ENCODE measurements at regions of chr1 and their contacts with region 1.

Region 1: GRCh38 chr1:37682334-37682987 is 9.9 kb upstream of the CDCA8 start:
- DNase-seq: peak; percentile 79
- ATAC-seq: peak; percentile 77
- H3K4me3 ChIP-seq: no peak overlapping the region
- H3K27ac ChIP-seq: no peak overlapping the region
- H3K4me1 ChIP-seq: no peaks in the 10 kb centered on the region
- H3K27me3 ChIP-seq: no peaks in the 10 kb centered on the region
- CTCF ChIP-seq: peak; percentile 93

Region 2: GRCh38 chr1:36516372-36517325 is 1165.8 kb before region 1 on chr1:
- CTCF ChIA-PET with region 1: no interaction called
- POLR2A ChIA-PET with region 1: no interaction called
- intact Hi-C with region 1: loop called (anchors 10 kb)
- DNase-seq: peak; percentile 59
- ATAC-seq: peak; percentile 90
- H3K4me3 ChIP-seq: no peak overlapping the region
- H3K27ac ChIP-seq: no peak overlapping the region
- H3K4me1 ChIP-seq: no peaks in the 10 kb centered on the region
- H3K27me3 ChIP-seq: no peaks in the 10 kb centered on the region
- CTCF ChIP-seq: peak; percentile 94

Region 3: DNA sequence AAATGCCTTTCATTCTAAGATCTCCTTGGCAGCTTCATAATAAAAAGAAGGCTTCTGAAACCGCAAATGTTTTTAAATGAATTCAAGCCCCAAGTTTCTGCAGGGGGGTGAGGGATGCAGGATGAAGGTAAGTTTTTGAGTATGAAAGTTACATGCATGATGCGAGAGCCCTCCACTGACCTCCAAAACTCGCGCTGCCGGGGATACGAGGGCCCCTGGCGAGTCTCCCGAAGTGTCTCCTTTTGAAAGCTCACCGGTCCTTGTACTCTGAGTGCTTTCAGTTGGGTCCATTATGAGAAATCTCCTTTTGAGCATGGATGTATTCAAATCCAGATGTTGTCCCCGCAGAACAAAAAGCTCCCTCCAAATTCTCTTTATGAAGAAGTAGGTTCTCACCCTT is 226.9 kb before region 1 on chr1:
- CTCF ChIA-PET with region 1: no interaction called
- POLR2A ChIA-PET with region 1: no interaction called
- intact Hi-C with region 1: loop called (anchors 1 kb)
- DNase-seq: no peak
- ATAC-seq: no peak
- H3K4me3 ChIP-seq: no peak overlapping the region
- H3K27ac ChIP-seq: no peak overlapping the region
- H3K4me1 ChIP-seq: peaks cover 8% of the 10 kb centered on the region; the same call in 1 of the 2 replicates
- H3K27me3 ChIP-seq: no peaks in the 10 kb centered on the region
- CTCF ChIP-seq: no peak

Region 4: DNA sequence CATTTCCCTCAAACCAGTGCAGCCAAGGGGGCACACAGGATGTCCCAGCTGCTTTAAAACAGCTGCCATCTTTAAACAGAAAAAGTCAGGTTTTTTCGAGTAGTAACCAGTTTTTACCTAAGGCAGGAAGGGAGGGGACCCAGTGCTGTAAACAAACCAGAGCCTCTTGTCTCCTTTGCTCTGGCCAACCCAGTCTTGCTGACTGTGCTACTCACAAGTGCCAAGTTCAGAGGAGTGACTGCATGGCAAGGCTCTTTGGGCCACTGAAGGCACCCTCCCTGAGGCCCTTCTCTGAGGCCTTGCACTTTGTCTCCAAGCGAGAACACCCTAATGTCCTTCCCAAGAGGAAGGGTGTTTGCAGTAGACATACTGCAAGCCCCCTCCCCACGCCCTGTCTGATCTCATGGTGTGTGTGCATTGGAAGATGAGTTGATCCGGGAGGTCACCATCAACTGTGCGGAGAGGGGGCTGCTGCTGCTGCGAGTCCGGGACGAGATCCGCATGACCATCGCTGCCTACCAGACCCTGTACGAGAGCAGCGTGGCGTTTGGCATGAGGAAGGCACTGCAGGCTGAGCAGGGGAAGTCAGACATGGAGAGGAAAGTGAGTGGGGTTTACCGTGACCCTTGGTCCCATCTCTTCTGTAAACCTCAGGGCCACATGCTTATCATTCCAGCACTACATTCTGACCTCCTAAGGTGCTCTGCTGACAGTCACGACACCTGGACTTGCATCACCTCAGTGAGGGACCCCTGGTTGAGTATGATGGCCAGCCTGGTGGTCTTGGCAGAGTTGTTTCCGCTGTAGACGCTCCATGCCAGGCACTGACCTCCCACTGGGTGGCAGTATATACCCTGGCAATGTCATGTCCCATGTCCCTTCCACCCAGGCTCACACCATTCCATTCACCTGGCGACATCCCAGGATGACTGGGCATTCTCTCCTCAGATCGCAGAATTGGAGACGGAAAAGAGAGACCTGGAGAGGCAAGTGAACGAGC is 121.0 kb before region 1 on chr1:
- CTCF ChIA-PET with region 1: no interaction called
- POLR2A ChIA-PET with region 1: no interaction called
- intact Hi-C with region 1: loop called (anchors 1 kb)
- DNase-seq: peak; percentile 64
- ATAC-seq: peak; percentile 58
- H3K4me3 ChIP-seq: no peak overlapping the region
- H3K27ac ChIP-seq: no peak overlapping the region
- H3K4me1 ChIP-seq: peaks cover 2% of the 10 kb centered on the region; the same call in 1 of the 2 replicates
- H3K27me3 ChIP-seq: no peaks in the 10 kb centered on the region
- CTCF ChIP-seq: peak; percentile 85

Region 5: GRCh38 chr1:37602750-37603694 is 79.4 kb before region 1 on chr1:
- CTCF ChIA-PET with region 1: interaction called, 4 read pairs
- POLR2A ChIA-PET with region 1: no interaction called
- intact Hi-C with region 1: loop called (anchors 1 kb)
- DNase-seq: peak; percentile 52
- ATAC-seq: peak; percentile 73
- H3K4me3 ChIP-seq: no peak overlapping the region
- H3K27ac ChIP-seq: no peak overlapping the region
- H3K4me1 ChIP-seq: no peaks in the 10 kb centered on the region
- H3K27me3 ChIP-seq: peaks cover 11% of the 10 kb centered on the region
- CTCF ChIP-seq: peak; percentile 88